ENCODE measurements at regions of chr21 and their contacts with region 1.

Region 1: DNA sequence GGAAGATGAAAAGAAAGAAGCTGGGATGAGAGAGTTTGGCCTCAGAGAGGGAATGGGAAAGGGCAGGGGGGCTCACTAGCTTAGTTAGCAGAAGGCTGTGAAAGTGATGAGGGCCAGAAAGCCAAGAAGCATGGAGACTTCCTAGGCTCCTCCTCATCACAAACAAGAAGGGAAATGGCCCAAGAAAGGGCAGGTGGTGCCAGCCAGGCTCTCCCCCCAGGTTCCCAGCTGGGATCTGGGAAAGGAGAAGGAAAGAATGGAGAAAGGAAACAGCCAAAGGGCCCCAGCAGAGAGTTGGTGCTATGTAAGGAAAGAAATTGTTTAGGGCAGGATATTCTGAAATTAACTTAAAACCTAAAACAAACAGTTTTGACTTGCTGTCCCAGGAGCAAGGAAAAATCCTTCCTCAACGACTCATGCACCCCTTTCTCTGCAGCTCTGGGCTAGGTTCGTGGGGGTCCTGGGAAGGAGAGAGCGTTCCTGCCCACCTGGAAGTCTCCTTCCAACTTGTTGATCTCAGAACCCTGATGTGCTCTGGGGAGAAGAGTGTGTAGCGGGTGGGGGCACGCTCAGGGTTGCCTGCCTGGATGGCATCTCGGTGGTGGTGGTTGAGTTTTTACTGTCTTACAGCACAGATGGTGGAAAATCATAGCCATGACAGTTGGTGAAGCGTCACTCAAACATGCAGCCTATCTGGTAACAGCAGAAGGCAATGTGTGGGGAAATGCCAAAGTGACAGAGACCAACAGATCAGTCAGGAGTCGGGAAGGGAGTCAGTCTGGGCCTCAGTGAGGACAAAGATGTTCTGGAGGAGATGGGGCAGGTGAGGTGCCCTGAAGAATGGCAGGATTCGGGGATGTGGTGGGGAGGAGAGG is 147.3 kb downstream of the CLIC6 start:
- DNase-seq: no peak
- H3K4me3 ChIP-seq: no peak overlapping the region
- H3K27ac ChIP-seq: no peak overlapping the region
- H3K4me1 ChIP-seq: peaks cover 0 to 37% (median 23%) of the 10 kb centered on the region in 4 donors
- H3K27me3 ChIP-seq: no peaks in the 10 kb centered on the region
- CTCF ChIP-seq: no peak
- EP300 ChIP-seq: no peak
- POLR2A ChIP-seq: no peak

Region 2: DNA sequence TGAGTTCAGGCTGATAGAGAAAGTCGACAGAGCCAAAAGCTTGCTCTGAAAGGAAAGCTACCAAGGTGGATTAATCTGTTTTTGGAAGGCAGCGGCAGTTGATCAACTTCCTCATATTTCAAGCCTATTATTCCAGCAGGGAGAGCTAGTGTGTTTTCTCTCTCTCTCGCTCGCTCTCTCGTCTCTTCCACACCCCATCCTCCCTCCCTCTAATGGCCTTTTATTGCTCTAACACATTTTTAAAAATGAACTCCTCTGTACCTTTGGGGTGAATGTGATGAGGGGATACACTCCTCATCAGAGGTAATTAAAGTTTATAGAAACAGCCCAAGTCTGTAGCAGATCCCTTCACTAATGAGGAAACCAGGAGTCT is 20.9 kb before region 1 on chr21:
- in situ Hi-C with region 1: no loop called
- intact Hi-C with region 1: loop called (anchors 1 kb)
- DNase-seq: no peak
- H3K4me3 ChIP-seq: no peak overlapping the region
- H3K27ac ChIP-seq: peak overlapping the region; percentile 72 to 79 (median 78)
- H3K4me1 ChIP-seq: peaks cover 22 to 50% (median 33%) of the 10 kb centered on the region in 4 donors
- H3K27me3 ChIP-seq: no peaks in the 10 kb centered on the region
- CTCF ChIP-seq: peak in 3 of 5 experiments; percentile 12 to 32 (median 19)
- EP300 ChIP-seq: no peak
- POLR2A ChIP-seq: no peak